Caco-2 (cell line): ENCODE measurements at regions of chr13 and their contacts with region 1.

Region 1: GRCh38 chr13:50081679-50082425 is 66.6 kb downstream of the KCNRG start:
- DNase-seq: peak; percentile 99
- H3K4me3 ChIP-seq: peak overlapping the region; percentile 47
- H3K4me3 Mint-ChIP-seq: peak overlapping the region; percentile 87
- H3K27ac Mint-ChIP-seq: peak overlapping the region; percentile 96
- H3K4me1 ChIP-seq: peaks cover 10% of the 10 kb centered on the region; the same call in 1 of the 2 replicates
- H3K4me1 Mint-ChIP-seq: no peaks in the 10 kb centered on the region
- H3K27me3 ChIP-seq: no peaks in the 10 kb centered on the region
- H3K27me3 Mint-ChIP-seq: no peaks in the 10 kb centered on the region
- CTCF ChIP-seq: peak; percentile 15 to 29

Region 2: DNA sequence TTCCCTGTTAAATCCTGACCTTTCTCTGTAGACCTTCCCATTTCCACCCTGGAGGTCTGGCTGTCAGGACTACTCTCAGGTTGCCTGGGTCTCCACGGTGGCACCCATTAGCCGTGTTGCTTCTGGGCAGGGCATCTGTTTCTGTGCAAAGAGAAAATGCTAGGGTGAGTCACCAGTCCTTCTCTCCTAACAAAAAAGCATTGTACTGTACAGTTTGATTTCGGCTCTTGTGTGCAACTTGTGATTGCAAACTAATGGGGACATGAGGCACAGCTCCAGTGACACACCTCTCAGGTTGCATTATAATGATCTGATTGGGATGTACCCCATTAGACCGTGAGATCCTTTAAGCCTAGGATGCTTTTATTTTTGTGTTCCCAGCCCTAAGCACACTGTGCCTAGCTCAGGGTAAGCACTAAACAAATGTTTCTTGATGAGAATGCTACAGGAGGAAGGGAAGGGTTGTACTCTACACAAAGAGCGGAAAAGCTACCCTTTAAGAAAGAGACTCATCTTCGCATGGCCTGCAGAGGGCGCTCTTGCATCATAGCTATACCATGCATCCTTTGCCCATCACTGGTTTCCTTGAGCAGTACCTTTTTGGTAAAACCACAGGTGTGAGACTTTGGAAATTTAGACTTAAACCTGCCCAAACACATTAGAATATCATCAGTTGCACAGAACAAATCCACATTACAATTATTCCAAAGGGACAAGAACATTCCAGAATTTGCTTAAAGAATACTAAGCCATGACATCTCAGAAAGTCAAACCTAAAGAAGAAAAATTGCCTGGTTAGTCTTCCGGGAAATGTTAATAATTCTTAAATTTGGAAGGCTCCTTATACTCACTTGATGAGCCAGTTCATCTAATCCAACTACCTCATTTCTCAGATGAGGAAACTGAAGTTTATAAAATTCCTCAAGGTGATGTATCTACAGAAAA is 105.3 kb before region 1 on chr13:
- CTCF ChIA-PET with region 1: interaction called, 8 read pairs
- POLR2A ChIA-PET with region 1: interaction called, 3 read pairs
- intact Hi-C with region 1: loop called (anchors 2 kb)
- DNase-seq: peak; percentile 56 to 71
- H3K4me3 ChIP-seq: no peak overlapping the region
- H3K4me3 Mint-ChIP-seq: no peak overlapping the region
- H3K27ac Mint-ChIP-seq: no peak overlapping the region
- H3K4me1 ChIP-seq: peaks cover 10% of the 10 kb centered on the region; the same call in 1 of the 2 replicates
- H3K4me1 Mint-ChIP-seq: peaks cover 18% of the 10 kb centered on the region
- H3K27me3 ChIP-seq: no peaks in the 10 kb centered on the region
- H3K27me3 Mint-ChIP-seq: no peaks in the 10 kb centered on the region
- CTCF ChIP-seq: peak; percentile 93 to 94

Region 3: DNA sequence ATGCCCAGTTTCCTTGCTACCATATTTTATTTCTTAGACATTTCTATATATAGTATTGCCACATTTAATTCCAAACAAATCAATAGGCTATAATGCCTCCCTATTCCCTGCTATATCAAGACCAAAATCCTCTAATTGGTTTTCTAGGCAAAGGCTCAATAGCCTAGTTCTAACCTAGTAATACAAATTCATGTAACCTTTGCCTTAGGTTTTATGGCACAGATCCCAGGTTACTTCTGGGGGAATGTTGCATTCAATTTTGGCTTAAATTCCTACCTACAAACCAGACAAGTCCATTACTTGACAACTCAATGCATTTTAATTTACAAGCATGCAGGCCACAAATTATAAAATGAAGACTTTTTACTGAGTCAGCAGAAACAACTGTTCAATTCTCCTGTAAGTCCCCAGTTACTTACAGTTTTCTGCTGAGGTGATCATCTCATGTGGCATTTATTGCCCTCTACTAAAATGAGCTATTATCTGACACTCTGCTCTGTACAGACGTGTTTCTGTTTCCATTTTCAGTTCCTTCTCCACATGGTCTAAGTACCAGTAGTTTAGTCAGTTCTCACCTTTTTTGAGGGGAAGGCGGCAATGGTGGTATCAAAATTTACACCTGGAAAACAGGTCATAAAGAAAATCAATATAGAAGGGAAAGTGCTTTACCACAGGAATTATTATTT is 54.9 kb before region 1 on chr13:
- CTCF ChIA-PET with region 1: no interaction called
- POLR2A ChIA-PET with region 1: no interaction called
- intact Hi-C with region 1: no loop called
- DNase-seq: no peak
- H3K4me3 ChIP-seq: no peak overlapping the region
- H3K4me3 Mint-ChIP-seq: no peak overlapping the region
- H3K27ac Mint-ChIP-seq: no peak overlapping the region
- H3K4me1 ChIP-seq: peaks cover 6% of the 10 kb centered on the region; the same call in 1 of the 2 replicates
- H3K4me1 Mint-ChIP-seq: no peaks in the 10 kb centered on the region
- H3K27me3 ChIP-seq: no peaks in the 10 kb centered on the region
- H3K27me3 Mint-ChIP-seq: no peaks in the 10 kb centered on the region
- CTCF ChIP-seq: no peak

Region 4: GRCh38 chr13:50123862-50124536 is 42.1 kb after region 1 on chr13:
- CTCF ChIA-PET with region 1: interaction called, 4 read pairs
- POLR2A ChIA-PET with region 1: interaction called, 29 read pairs
- intact Hi-C with region 1: loop called (anchors 1 kb)
- DNase-seq: peak; percentile 95 to 98
- H3K4me3 ChIP-seq: peak overlapping the region; percentile 100
- H3K4me3 Mint-ChIP-seq: peak overlapping the region; percentile 95
- H3K27ac Mint-ChIP-seq: peak overlapping the region; percentile 90
- H3K4me1 ChIP-seq: peaks cover 22% of the 10 kb centered on the region
- H3K4me1 Mint-ChIP-seq: peaks cover 26% of the 10 kb centered on the region
- H3K27me3 ChIP-seq: no peaks in the 10 kb centered on the region
- H3K27me3 Mint-ChIP-seq: no peaks in the 10 kb centered on the region
- CTCF ChIP-seq: no peak

Region 5: DNA sequence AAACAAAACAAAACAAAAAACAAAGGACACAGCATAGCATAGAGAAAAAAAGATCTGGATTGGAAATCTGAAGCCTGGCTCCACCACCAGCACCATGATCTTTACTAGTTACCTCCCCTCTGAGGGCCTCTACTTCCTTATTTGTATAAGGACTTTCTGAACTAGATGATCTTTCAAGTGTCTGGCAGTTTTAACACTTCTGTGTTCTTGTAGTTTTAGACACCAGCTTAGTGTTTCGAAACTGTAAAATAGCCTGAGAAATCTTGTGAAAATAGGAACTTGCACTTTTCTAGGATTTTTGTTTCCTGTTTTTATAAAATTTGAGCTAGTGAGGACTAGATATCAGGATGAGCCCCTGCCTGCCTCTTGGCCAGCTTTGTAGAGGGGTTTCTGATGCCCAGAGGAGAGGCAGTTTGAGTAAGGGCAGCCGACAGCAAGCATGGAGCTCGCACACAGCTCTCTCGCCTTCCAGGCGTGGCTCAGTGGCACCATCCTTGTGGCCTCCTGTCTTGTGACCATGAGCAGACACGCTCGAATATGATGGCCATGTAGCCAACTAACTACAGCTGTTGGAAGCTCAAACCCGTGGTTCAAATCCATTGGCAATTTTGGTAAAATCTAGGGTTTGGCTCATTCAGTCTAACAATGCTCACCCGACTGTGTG is 252.4 kb after region 1 on chr13:
- CTCF ChIA-PET with region 1: no interaction called
- POLR2A ChIA-PET with region 1: interaction called, 3 read pairs
- intact Hi-C with region 1: loop called (anchors 10 kb)
- DNase-seq: peak; percentile 40 to 45
- H3K4me3 ChIP-seq: no peak overlapping the region
- H3K4me3 Mint-ChIP-seq: peak overlapping the region; percentile 60
- H3K27ac Mint-ChIP-seq: peak overlapping the region; percentile 80
- H3K4me1 ChIP-seq: peaks cover 34% of the 10 kb centered on the region
- H3K4me1 Mint-ChIP-seq: peaks cover 25% of the 10 kb centered on the region
- H3K27me3 ChIP-seq: no peaks in the 10 kb centered on the region
- H3K27me3 Mint-ChIP-seq: no peaks in the 10 kb centered on the region
- CTCF ChIP-seq: no peak

Region 6: DNA sequence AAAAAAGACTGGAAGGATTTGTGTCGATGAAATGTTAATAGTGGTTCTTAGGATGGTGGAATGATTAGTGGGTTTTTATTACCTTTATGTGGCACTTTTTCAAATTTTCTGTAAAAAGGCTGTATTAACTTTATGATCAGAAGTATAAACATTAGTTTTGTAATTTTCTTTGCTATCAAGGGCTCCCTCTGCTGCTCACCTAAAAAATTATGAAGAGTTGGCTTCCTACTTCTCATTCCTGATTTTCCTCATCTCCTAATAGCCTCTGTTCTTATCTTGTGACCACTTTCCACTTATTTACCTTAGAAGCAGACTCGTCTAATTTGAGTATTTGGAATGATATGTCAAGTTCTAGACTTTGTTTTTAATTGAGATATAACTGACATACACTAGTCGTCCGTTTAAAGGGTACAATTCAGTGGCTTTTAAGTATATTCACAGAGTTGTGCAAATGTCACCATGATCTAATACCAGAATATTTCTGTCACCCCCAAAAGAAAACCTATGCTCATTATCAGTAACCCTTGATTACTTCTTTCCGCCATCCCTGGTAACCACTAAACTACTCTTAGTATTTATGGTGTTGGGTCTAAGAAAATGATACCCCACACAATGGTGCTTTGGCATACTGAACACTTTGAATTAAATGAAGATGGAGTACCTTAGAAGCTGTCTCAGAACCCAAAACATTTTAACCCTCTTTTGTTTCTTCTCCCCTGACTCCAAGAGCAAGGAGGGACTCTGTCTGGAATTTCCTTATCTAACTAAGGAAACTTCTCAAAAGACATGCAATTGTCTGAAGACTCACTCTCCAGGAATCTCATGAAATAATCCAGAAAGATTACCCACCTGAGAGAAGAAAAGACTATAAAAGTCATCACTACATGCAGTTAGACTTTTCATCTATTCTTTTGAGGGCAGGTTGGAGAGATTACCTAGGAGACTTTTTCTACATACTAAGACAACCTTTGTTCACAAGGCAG is 450.4 kb after region 1 on chr13:
- CTCF ChIA-PET with region 1: no interaction called
- POLR2A ChIA-PET with region 1: no interaction called
- intact Hi-C with region 1: loop called (anchors 1 kb)
- DNase-seq: peak in 1 of 2 experiments; percentile 25
- H3K4me3 ChIP-seq: no peak overlapping the region
- H3K4me3 Mint-ChIP-seq: no peak overlapping the region
- H3K27ac Mint-ChIP-seq: no peak overlapping the region
- H3K4me1 ChIP-seq: peaks cover 7% of the 10 kb centered on the region
- H3K4me1 Mint-ChIP-seq: peaks cover 24% of the 10 kb centered on the region
- H3K27me3 ChIP-seq: no peaks in the 10 kb centered on the region
- H3K27me3 Mint-ChIP-seq: no peaks in the 10 kb centered on the region
- CTCF ChIP-seq: peak; percentile 36 to 50

Region 7: DNA sequence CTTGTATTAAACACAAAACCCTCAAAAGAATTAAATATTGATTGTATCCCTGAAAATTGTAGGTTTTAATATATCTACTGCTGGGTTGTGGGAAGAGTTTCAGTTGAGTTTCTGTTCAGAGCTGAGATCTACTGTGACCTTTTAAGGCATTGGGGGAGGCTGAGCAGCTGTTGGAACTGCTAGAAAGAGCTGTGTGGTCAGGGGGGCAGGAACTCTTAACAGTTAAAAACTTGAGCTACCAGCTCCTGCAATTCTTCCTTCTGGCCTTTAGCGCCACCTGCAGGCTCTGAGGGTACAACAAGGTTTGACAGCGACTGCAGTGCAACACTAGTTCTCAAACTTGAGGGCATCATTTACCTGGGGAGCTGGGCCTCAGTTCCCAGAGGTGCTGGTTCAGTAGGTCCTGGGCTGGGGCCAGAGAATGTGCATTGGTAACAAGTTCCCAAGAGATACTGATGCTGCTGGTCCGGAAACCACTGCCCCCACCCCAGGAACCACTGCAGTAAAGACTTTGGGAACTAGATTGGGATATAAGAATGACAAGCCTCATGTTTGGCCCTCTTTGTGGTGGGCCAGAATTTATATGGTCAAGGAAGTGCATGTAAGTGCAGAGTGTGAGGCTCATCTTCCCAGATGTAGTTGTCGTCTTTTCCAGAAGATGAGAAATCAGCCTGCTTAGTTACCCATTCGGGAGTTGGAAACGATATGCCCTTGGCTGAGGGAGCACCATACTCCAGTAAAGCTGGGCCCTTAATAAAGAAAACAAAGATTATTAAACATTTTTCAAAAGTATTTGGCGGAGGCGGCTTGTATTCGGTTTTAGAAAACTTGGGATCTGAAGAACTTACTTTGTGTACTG is 830.3 kb after region 1 on chr13:
- CTCF ChIA-PET with region 1: interaction called, 5 read pairs
- POLR2A ChIA-PET with region 1: interaction called, 3 read pairs
- intact Hi-C with region 1: loop called (anchors 1 kb)
- DNase-seq: peak; percentile 87 to 89
- H3K4me3 ChIP-seq: no peak overlapping the region
- H3K4me3 Mint-ChIP-seq: peak overlapping the region; percentile 55
- H3K27ac Mint-ChIP-seq: peak overlapping the region; percentile 55
- H3K4me1 ChIP-seq: peaks cover 13% of the 10 kb centered on the region
- H3K4me1 Mint-ChIP-seq: peaks cover 25% of the 10 kb centered on the region
- H3K27me3 ChIP-seq: no peaks in the 10 kb centered on the region
- H3K27me3 Mint-ChIP-seq: no peaks in the 10 kb centered on the region
- CTCF ChIP-seq: peak; percentile 88 to 92